ENCODE measurements at regions of chr10 and their contacts with region 1.

Region 1: DNA sequence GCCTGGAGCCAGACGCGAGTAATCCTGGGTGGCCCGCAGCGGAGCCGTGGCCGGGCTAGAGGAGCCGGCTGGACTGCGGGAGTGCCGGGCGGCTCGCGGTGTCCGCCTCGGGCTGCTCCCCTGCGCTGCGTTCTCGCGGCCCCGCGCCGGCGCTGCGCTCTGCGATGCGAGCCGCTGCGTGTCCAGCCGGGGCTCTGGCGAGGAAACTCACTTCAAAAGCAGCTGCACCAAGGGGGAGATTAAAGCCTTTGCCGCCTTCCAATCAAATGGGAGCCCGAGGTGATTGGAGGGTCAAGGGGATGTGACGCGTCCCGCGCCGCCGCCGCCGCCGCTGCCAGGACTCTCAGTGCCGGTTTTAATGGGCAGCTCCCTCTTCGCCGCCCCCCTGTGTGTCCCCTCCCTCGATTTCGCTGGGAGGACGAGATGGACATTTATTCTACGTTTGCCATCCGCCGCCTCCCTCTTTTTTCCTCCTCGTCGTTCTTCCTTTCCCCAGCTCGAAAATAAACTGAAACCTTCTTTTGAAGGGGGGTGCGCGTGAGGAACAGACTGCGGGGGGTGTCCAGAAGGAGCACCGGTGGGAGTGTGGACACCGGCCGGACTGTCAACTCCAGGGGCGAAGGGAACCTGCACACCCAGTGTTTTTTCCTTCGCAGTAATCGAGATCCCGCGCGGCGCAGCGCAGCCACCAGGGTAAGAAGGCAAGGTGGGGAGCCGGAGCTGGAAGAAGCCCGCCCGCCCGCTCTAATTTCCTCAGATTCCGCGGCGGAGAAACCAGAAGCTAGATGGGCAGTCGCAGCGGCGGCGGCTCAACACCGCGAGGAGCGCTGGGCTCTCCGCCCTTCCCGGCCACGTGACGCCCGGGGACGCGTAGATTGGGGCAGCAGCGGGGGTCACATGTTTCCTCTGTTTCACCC is at the start of gene ZNF503:
- DNase-seq: peak; percentile 94 to 99 (median 98)
- ATAC-seq: peak; percentile 54 to 75 (median 62)
- H3K4me3 ChIP-seq: peak within 1 kb of the TSS; percentile 91 to 98 (median 94)
- H3K27ac ChIP-seq: peak within 1 kb of the TSS; percentile 97 to 99 (median 98)
- H3K4me1 ChIP-seq: no peaks in the 10 kb centered on the region
- H3K27me3 ChIP-seq: no peaks in the 10 kb centered on the region
- CTCF ChIP-seq: peak in 1 of 4 donors; percentile 9
- total RNA-seq, gene ZNF503: 18.3 to 41.2 (median 25.1) TPM

Region 2: GRCh38 chr10:75223507-75223906 is 178.3 kb before region 1 on chr10:
- intact Hi-C with region 1: no loop called
- DNase-seq: no peak
- ATAC-seq: no peak
- H3K4me3 ChIP-seq: no peak overlapping the region
- H3K27ac ChIP-seq: peak overlapping the region in 1 of 4 donors; percentile 73
- H3K4me1 ChIP-seq: peaks cover 25 to 42% (median 42%) of the 10 kb centered on the region in 3 donors
- H3K27me3 ChIP-seq: no peaks in the 10 kb centered on the region
- CTCF ChIP-seq: no peak

Region 3: GRCh38 chr10:75294866-75295701 is 106.7 kb before region 1 on chr10:
- intact Hi-C with region 1: loop called in 1 of 3 experiments (anchors 10 kb)
- DNase-seq: peak; percentile 89 to 96 (median 93)
- ATAC-seq: peak; percentile 82 to 89 (median 85)
- H3K4me3 ChIP-seq: peak overlapping the region; percentile 13 to 60 (median 53)
- H3K27ac ChIP-seq: peak overlapping the region; percentile 95 to 99 (median 98)
- H3K4me1 ChIP-seq: peaks cover 17 to 29% (median 27%) of the 10 kb centered on the region in 3 donors
- H3K27me3 ChIP-seq: no peaks in the 10 kb centered on the region
- CTCF ChIP-seq: peak in 3 of 4 donors; percentile 12 to 19 (median 13)

Region 4: GRCh38 chr10:75772153-75772887 is 370.5 kb after region 1 on chr10:
- intact Hi-C with region 1: loop called in 1 of 3 experiments (anchors 10 kb)
- DNase-seq: no peak
- ATAC-seq: peak in 2 of 4 donors; percentile 22
- H3K4me3 ChIP-seq: peak overlapping the region in 2 of 4 donors; percentile 5 to 21
- H3K27ac ChIP-seq: peak overlapping the region in 2 of 4 donors; percentile 19 to 73
- H3K4me1 ChIP-seq: peaks cover 29 to 50% (median 32%) of the 10 kb centered on the region in 3 donors
- H3K27me3 ChIP-seq: no peaks in the 10 kb centered on the region
- CTCF ChIP-seq: no peak

Region 5: GRCh38 chr10:75894761-75895160 is 492.9 kb after region 1 on chr10:
- intact Hi-C with region 1: no loop called
- DNase-seq: no peak
- ATAC-seq: no peak
- H3K4me3 ChIP-seq: no peak overlapping the region
- H3K27ac ChIP-seq: no peak overlapping the region
- H3K4me1 ChIP-seq: no peaks in the 10 kb centered on the region
- H3K27me3 ChIP-seq: no peaks in the 10 kb centered on the region
- CTCF ChIP-seq: no peak

Region 6: GRCh38 chr10:75922435-75922834 is 520.6 kb after region 1 on chr10:
- intact Hi-C with region 1: loop called in 1 of 3 experiments (anchors 10 kb)
- DNase-seq: no peak
- ATAC-seq: peak in 3 of 4 donors; percentile 40 to 84 (median 68)
- H3K4me3 ChIP-seq: no peak overlapping the region
- H3K27ac ChIP-seq: no peak overlapping the region
- H3K4me1 ChIP-seq: no peaks in the 10 kb centered on the region
- H3K27me3 ChIP-seq: no peaks in the 10 kb centered on the region
- CTCF ChIP-seq: peak in 1 of 4 donors; percentile 9

Region 7: GRCh38 chr10:76036111-76036940 is 634.5 kb after region 1 on chr10:
- intact Hi-C with region 1: loop called in 2 of 3 experiments (anchors 10 kb)
- DNase-seq: peak; percentile 54 to 88 (median 78)
- ATAC-seq: peak; percentile 74 to 94 (median 90)
- H3K4me3 ChIP-seq: peak overlapping the region in 2 of 4 donors; percentile 3 to 17
- H3K27ac ChIP-seq: no peak overlapping the region
- H3K4me1 ChIP-seq: peaks cover 0 to 12% (median 0%) of the 10 kb centered on the region in 3 donors
- H3K27me3 ChIP-seq: no peaks in the 10 kb centered on the region
- CTCF ChIP-seq: peak; percentile 84 to 95 (median 88)

Region 8: GRCh38 chr10:76303682-76304316 is 902.0 kb after region 1 on chr10:
- intact Hi-C with region 1: loop called in 1 of 3 experiments (anchors 10 kb)
- DNase-seq: peak; percentile 37 to 75 (median 62)
- ATAC-seq: peak; percentile 78 to 94 (median 93)
- H3K4me3 ChIP-seq: no peak overlapping the region
- H3K27ac ChIP-seq: no peak overlapping the region
- H3K4me1 ChIP-seq: peaks cover 22 to 38% (median 27%) of the 10 kb centered on the region in 3 donors
- H3K27me3 ChIP-seq: no peaks in the 10 kb centered on the region
- CTCF ChIP-seq: peak in 3 of 4 donors; percentile 23 to 41 (median 41)

Region 9: DNA sequence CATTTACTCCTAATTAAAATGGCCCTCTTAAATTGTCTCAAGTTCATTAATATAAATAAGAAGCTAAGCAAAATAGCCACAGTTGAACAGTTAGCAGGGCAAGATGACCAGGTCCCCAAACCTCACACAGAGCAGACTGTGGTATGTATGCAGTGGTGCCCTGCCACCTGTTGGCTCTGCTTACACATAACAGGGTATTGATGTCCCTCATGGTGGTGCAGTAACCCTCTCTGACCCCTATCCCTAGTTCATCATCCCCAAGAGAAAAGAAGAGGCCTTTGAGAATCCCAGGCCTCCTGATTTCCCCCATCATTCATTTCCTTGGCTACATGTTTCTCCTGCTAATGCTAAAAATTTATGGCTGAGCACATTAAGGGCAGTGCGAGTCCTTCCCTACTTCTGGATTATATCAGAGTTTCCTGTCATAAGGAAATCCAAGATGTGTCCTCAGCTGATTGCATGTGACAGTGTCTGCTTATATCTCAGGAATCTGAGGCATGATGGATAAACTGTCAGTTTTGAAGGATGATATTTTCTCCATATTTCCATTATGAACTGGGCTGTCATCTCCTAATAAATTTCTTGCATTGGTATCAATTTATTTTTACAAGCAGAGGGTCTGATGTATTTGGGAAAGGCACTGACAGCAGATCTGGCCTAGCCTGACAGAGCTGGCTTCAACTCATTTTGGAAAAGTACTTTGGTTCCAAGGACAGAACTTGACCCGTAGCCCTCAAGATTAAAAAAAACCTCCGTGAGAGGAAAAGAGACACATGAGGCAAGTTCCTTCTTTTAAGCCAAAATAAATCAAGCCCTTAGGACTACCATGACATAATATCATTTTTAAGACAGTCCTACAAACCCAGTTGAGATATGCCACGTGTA is 910.2 kb after region 1 on chr10:
- intact Hi-C with region 1: loop called in 2 of 3 experiments (anchors 10 kb)
- DNase-seq: peak in 3 of 6 donors; percentile 20 to 36 (median 31)
- ATAC-seq: peak; percentile 72 to 96 (median 90)
- H3K4me3 ChIP-seq: no peak overlapping the region
- H3K27ac ChIP-seq: no peak overlapping the region
- H3K4me1 ChIP-seq: peaks cover 0 to 4% (median 0%) of the 10 kb centered on the region in 3 donors
- H3K27me3 ChIP-seq: no peaks in the 10 kb centered on the region
- CTCF ChIP-seq: peak in 1 of 4 donors; percentile 30

Measured in pancreas (tissue), 10 donors.